Activated CD4-positive, alpha-beta T cell treated with anti-CD3 and anti-CD28 coated beads for 36 hours (primary cell): ENCODE measurements at regions of chr1 and their contacts with region 1.

Region 1: DNA sequence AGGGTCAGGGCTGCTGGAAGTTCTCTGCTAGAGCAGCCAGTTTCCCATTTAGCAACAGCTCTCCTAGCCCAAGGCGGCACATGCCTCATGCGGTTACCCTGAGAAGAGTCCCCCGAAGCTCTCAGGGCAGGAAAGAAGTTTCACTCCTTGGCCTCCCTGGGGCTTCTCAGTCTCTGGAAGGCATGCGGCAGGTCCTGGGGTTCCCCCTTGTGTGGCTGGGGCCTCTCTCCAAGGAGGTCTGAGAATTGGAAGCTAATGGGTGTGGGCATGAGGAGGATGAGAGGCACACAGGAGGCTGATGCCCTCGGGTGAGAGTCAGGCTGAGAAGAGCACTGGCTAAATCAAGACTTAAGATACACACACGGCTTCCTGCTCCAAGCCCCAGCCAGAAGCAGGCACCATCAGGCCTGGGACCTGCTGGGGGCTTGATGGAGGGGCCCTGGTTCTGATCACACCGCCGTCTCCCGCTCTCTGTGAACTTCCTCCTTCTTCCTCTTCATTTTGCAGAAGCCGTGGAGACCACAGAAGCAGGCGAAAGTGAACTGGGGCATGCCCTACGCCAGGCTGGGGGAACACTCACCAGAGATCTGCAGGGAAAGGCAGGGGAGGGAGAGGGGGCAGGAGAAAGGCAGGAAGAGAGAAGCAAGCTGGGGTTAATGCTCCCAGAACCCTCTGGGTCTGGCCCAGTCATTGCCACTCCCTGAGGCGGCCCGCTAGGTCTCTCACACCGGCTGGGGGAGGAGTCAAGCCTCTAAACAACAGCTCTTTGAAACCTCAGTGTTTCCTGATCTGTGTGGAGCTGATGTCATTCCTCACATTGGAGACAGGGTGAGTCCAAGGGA is 15.1 kb downstream of the BLACAT1 start:
- DNase-seq: peak; percentile 87
- ATAC-seq: peak; percentile 99
- H3K4me3 Mint-ChIP-seq: peak overlapping the region; percentile 70
- H3K27ac Mint-ChIP-seq: peak overlapping the region; percentile 87
- H3K4me1 Mint-ChIP-seq: peaks cover 17% of the 10 kb centered on the region
- H3K27me3 Mint-ChIP-seq: no peaks in the 10 kb centered on the region

Region 2: DNA sequence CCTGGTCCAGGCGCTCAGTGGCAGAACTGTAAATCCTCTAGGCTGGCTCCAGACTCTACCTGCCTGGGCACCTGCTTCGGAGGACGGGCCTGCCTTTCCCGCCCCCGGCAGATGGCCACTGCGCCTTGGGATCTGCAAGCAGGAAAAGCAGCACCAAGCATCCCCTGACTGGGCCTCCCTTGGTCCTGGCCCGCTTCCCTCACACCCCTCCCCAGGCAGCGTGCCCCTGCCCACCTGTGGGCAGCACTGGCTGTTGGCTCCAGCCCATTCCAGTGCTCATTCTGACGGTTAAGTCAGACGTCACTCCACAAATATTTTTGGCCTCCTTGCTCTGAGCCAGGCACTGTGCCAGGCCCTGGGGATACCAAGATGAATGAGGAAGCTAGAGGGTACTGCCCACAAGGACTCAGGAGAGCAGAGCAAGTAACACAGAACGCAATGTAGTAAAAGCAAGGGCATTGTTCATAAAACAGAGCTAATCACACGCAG is 37.1 kb after region 1 on chr1:
- CTCF ChIA-PET with region 1: interaction called, 3 read pairs
- POLR2A ChIA-PET with region 1: no interaction called
- intact Hi-C with region 1: loop called in 1 of 2 experiments (anchors 5 kb)
- DNase-seq: no peak
- ATAC-seq: no peak
- H3K4me3 Mint-ChIP-seq: no peak overlapping the region
- H3K27ac Mint-ChIP-seq: no peak overlapping the region
- H3K4me1 Mint-ChIP-seq: peaks cover 21% of the 10 kb centered on the region
- H3K27me3 Mint-ChIP-seq: peaks cover 50% of the 10 kb centered on the region